Activated CD8-positive, alpha-beta T cell treated with anti-CD3 and anti-CD28 coated beads for 36 hours (primary cell): ENCODE measurements at regions of chr17 and their contacts with region 1.

Region 1: GRCh38 chr17:66310528-66311148 is 8.2 kb downstream of the PRKCA start:
- DNase-seq: peak; percentile 62
- ATAC-seq: peak; percentile 25
- H3K4me3 Mint-ChIP-seq: no peak overlapping the region
- H3K27ac Mint-ChIP-seq: peak overlapping the region; percentile 96
- H3K4me1 Mint-ChIP-seq: peaks cover 90% of the 10 kb centered on the region
- H3K27me3 Mint-ChIP-seq: no peaks in the 10 kb centered on the region
- CTCF ChIP-seq: peak; percentile 33

Region 2: DNA sequence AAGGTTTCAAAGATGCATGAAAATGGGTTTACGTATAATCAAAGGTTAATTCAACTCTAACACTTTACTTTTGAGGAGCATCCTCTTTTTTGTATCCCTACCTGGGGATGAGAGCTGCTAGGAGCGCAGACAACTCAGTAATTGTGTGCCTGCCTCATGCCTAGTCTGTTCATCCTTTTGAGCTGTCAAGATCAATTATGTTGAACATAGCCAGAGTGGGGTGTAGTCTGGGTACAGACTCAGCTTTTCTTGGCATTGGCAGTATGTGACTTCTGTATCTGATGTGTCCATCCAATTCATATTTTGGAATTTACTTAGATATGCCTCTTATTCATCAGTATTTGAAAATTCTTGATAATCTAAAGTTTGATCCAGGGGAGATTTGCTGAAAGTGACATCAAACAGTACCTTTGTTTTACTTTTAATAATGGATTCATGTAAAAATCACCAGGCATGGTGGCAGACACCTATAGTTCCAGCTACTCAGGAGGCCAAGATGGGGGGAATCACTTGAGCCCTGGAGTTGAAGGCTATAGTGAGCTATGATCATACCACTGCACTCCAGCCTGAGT is 15.9 kb after region 1 on chr17:
- CTCF ChIA-PET with region 1: interaction called, 13 read pairs
- POLR2A ChIA-PET with region 1: interaction called, 8 read pairs
- intact Hi-C with region 1: no loop called
- DNase-seq: no peak
- ATAC-seq: no peak
- H3K4me3 Mint-ChIP-seq: no peak overlapping the region
- H3K27ac Mint-ChIP-seq: peak overlapping the region; percentile 71
- H3K4me1 Mint-ChIP-seq: peaks cover 73% of the 10 kb centered on the region
- H3K27me3 Mint-ChIP-seq: no peaks in the 10 kb centered on the region
- CTCF ChIP-seq: no peak

Region 3: GRCh38 chr17:66348584-66349165 is 38.0 kb after region 1 on chr17:
- CTCF ChIA-PET with region 1: no interaction called
- POLR2A ChIA-PET with region 1: interaction called, 4 read pairs
- intact Hi-C with region 1: loop called (anchors 5 kb)
- DNase-seq: peak; percentile 56
- ATAC-seq: peak; percentile 82
- H3K4me3 Mint-ChIP-seq: peak overlapping the region; percentile 5
- H3K27ac Mint-ChIP-seq: peak overlapping the region; percentile 64
- H3K4me1 Mint-ChIP-seq: peaks cover 66% of the 10 kb centered on the region
- H3K27me3 Mint-ChIP-seq: no peaks in the 10 kb centered on the region
- CTCF ChIP-seq: no peak

Region 4: DNA sequence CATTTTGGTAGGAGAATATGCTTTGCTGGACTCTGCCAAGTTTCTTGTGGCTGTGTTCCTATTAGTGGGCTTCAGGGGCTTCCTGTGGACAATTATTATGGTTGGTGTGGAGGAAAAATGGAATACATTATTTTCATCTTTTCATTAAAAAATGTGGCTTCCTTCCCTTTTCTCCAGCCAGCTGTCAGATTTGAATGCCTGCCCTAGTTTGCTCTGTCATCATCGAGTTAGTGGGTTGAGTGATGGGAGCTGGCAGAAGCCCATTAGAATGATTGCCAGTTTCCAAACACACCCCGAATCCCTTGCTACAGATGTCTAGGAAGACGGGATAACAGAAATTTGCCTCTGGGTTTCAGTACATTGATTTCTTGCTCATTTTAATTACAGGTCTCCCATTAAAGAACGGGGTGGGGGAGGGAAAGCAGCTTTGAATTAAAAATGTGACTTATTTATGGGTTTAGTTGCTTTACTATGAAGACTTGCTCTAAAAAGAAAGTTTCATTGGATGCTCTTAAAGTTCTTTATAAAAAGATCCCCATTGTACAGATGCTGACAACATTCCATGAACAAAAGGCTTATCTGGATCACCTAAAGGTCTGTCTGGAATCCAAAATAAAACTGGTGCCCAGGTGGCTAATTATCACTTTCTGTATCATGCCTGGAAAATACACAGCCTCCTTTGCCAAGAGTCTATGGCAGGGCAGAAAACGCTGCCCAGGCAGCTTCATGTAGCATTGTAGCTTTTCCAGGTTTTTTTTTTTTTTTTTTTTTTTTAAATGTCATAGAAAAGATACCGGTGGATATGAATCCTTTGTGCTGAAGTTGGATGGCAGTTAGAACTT is 95.4 kb after region 1 on chr17:
- CTCF ChIA-PET with region 1: interaction called, 10 read pairs
- POLR2A ChIA-PET with region 1: no interaction called
- intact Hi-C with region 1: no loop called
- DNase-seq: no peak
- ATAC-seq: no peak
- H3K4me3 Mint-ChIP-seq: no peak overlapping the region
- H3K27ac Mint-ChIP-seq: peak overlapping the region; percentile 85
- H3K4me1 Mint-ChIP-seq: peaks cover 83% of the 10 kb centered on the region
- H3K27me3 Mint-ChIP-seq: no peaks in the 10 kb centered on the region
- CTCF ChIP-seq: no peak

Region 5: GRCh38 chr17:66466840-66467367 is 156.3 kb after region 1 on chr17:
- CTCF ChIA-PET with region 1: interaction called, 3 read pairs
- POLR2A ChIA-PET with region 1: interaction called, 5 read pairs
- intact Hi-C with region 1: loop called (anchors 5 kb)
- DNase-seq: peak; percentile 80
- ATAC-seq: peak; percentile 89
- H3K4me3 Mint-ChIP-seq: peak overlapping the region; percentile 44
- H3K27ac Mint-ChIP-seq: peak overlapping the region; percentile 91
- H3K4me1 Mint-ChIP-seq: peaks cover 69% of the 10 kb centered on the region
- H3K27me3 Mint-ChIP-seq: no peaks in the 10 kb centered on the region
- CTCF ChIP-seq: no peak